H1 (cell line): ENCODE measurements at regions of chr1 and their contacts with region 1.

Region 1: DNA sequence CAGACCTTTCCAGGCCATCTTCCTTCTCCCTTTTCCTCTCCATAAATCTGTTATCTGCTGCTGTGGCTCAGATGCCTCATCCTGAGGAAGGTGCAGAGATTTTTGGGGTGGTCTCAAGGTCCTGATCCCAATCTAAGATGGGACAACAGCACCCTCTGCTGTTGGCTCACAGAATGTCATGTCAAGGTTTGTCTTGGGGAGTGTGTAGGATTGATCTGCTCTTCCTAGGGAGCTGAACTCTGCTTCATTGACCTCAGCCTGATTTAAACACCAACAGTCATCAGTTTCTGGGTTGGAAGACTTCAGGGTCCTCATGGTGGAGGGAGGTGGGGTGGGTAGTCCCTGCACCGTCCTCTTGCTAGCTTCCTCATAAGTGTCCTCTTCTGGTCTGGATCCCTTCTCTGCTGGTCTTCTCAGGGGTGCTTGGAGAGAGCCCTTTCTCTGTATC is 62.8 kb upstream of the LAX1 start:
- DNase-seq: peak; percentile 34 to 90
- H3K4me3 ChIP-seq: no peak overlapping the region
- H3K27ac ChIP-seq: no peak overlapping the region
- H3K4me1 ChIP-seq: no peaks in the 10 kb centered on the region
- H3K27me3 ChIP-seq: no peaks in the 10 kb centered on the region
- CTCF ChIP-seq: peak; percentile 40 to 94 (median 93)
- EP300 ChIP-seq: no peak
- POLR2A ChIP-seq: no peak
- RAD21 ChIP-seq: peak; percentile 99

Region 2: DNA sequence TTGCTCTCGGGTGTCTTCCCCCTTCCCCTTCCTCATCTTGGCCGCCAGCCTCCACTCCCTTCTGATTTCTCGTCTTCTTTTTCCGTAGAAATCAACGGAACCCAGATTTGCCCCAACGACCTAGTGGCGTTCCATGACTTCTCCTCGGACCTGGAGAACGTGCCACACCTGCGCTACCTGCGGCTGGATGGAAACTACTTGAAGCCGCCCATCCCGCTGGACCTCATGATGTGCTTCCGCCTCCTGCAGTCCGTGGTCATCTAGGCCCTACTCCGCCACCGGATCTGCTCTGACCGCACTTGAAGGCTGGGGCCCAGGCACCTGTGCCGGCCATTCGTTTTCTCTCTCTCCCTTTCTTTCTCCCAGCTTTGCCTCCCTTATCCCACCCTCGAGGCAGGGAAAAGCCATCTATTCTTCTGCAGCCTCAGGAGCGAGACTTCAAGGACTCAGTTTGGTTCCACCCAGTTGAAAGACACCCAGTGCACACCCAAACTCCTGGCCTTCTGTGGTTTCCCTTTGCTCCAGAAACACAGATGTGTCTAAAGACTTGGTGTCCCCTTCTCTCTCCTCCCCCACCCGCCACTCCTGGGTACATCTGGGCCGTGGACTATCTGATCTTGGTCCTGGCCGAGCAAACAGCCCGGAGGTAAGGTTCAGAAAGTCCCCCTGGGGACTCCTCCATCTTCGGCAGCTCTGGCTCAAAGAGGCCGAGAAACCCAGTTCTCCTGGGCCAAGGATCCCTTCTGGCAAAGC is 215.4 kb before region 1 on chr1:
- CTCF ChIA-PET with region 1: interaction called, 21 read pairs
- POLR2A ChIA-PET with region 1: no interaction called
- DNase-seq: no peak
- H3K4me3 ChIP-seq: peak overlapping the region; percentile 25 to 60 (median 38); a peak in 6 of 8 replicates
- H3K27ac ChIP-seq: peak overlapping the region; percentile 34; the same call in 1 of the 2 replicates
- H3K4me1 ChIP-seq: peaks cover 0 to 11% (median 5%) of the 10 kb centered on the region in 4 experiments; a peak in 6 of 7 replicates
- H3K27me3 ChIP-seq: no peaks in the 10 kb centered on the region
- CTCF ChIP-seq: no peak
- EP300 ChIP-seq: no peak
- POLR2A ChIP-seq: no peak
- RAD21 ChIP-seq: no peak

Region 3: GRCh38 chr1:203504397-203505250 is 197.5 kb before region 1 on chr1:
- CTCF ChIA-PET with region 1: interaction called, 162 read pairs
- POLR2A ChIA-PET with region 1: no interaction called
- DNase-seq: peak in 1 of 2 experiments; percentile 90
- H3K4me3 ChIP-seq: no peak overlapping the region
- H3K27ac ChIP-seq: no peak overlapping the region
- H3K4me1 ChIP-seq: peaks cover 2 to 17% (median 11%) of the 10 kb centered on the region in 4 experiments
- H3K27me3 ChIP-seq: no peaks in the 10 kb centered on the region
- CTCF ChIP-seq: peak; percentile 60 to 87 (median 78)
- EP300 ChIP-seq: no peak
- POLR2A ChIP-seq: no peak
- RAD21 ChIP-seq: peak; percentile 94 to 95

Region 4: DNA sequence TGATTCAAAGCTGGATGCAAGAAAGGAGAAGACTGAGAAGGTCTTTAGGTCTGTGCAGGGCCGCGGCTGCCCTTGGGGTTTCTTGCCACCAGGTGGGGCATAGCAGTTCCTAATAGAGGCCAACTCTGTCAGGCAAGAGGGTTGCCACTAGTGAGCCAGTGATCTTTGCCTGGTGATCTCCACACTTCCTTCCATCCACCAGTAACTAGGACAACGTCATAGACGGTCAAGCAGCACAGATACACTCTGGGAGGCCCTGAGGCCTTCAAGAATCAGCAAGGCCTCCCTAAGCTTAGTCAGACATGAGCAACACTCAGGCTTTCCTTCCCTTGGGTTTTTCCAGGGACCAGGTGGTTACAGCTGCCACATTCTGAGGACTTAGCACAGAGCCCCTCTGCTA is 108.4 kb before region 1 on chr1:
- CTCF ChIA-PET with region 1: interaction called, 13 read pairs
- POLR2A ChIA-PET with region 1: no interaction called
- DNase-seq: peak in 1 of 2 experiments; percentile 63
- H3K4me3 ChIP-seq: no peak overlapping the region
- H3K27ac ChIP-seq: no peak overlapping the region
- H3K4me1 ChIP-seq: peaks cover 18 to 28% (median 23%) of the 10 kb centered on the region in 4 experiments
- H3K27me3 ChIP-seq: no peaks in the 10 kb centered on the region
- CTCF ChIP-seq: peak; percentile 59 to 63 (median 59)
- EP300 ChIP-seq: no peak
- POLR2A ChIP-seq: no peak
- RAD21 ChIP-seq: peak; percentile 55 to 66

Region 5: GRCh38 chr1:203615061-203615581 is 87.0 kb before region 1 on chr1:
- CTCF ChIA-PET with region 1: interaction called, 15 read pairs
- POLR2A ChIA-PET with region 1: no interaction called
- DNase-seq: no peak
- H3K4me3 ChIP-seq: no peak overlapping the region
- H3K27ac ChIP-seq: no peak overlapping the region
- H3K4me1 ChIP-seq: no peaks in the 10 kb centered on the region
- H3K27me3 ChIP-seq: no peaks in the 10 kb centered on the region
- CTCF ChIP-seq: no peak
- EP300 ChIP-seq: no peak
- POLR2A ChIP-seq: no peak
- RAD21 ChIP-seq: peak in 1 of 2 experiments; percentile 47; a peak in 3 of 4 replicates

Region 6: DNA sequence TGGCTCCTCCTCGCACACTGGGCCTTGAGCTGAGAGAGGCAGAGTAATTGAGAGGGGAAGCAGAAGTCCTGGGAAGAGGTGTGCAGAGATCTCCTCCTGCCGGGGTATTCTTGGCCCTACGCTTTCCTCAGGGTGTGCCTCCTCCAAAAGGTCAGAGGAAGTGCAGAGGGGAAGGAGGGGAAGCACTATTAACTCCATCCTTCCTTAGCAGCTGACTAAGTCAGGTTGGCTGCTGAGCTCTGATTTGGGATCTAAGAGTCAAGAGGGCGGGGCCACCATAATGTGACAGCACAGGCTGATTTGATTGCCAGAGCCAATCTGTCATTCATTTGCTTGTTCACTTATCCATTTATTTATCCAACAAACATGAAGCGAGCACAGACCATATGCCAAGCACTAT is 63.2 kb before region 1 on chr1:
- CTCF ChIA-PET with region 1: interaction called, 16 read pairs
- POLR2A ChIA-PET with region 1: no interaction called
- DNase-seq: no peak
- H3K4me3 ChIP-seq: no peak overlapping the region
- H3K27ac ChIP-seq: no peak overlapping the region
- H3K4me1 ChIP-seq: peaks cover 0 to 5% (median 1%) of the 10 kb centered on the region in 4 experiments; a peak in 3 of 7 replicates
- H3K27me3 ChIP-seq: no peaks in the 10 kb centered on the region
- CTCF ChIP-seq: no peak
- EP300 ChIP-seq: no peak
- POLR2A ChIP-seq: no peak
- RAD21 ChIP-seq: peak in 1 of 2 experiments; percentile 30; a peak in 3 of 4 replicates

Region 7: DNA sequence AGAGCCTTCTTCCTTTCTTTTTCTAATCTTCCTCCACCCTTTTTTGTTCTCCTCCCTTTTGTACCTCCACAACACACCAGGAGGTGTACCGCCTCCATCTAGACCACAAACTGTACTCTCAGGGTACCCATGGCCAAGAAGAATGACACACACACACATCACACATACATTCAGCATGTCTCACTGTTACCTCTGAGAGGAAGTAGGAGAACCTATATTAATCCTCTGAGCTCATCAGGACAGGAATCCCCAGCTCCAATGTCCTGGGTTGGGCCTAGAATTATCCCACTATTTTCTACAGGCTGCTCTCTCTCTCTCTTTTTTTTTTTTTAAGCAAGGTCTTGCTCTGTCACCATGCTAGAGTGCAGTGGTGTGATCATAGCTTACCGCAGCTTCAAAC is 38.9 kb before region 1 on chr1:
- CTCF ChIA-PET with region 1: interaction called, 12 read pairs
- POLR2A ChIA-PET with region 1: no interaction called
- DNase-seq: no peak
- H3K4me3 ChIP-seq: no peak overlapping the region
- H3K27ac ChIP-seq: no peak overlapping the region
- H3K4me1 ChIP-seq: peaks cover 0 to 2% (median under 1%) of the 10 kb centered on the region in 4 experiments; a peak in 1 of 7 replicates
- H3K27me3 ChIP-seq: no peaks in the 10 kb centered on the region
- CTCF ChIP-seq: no peak
- EP300 ChIP-seq: no peak
- POLR2A ChIP-seq: no peak
- RAD21 ChIP-seq: no peak